ENCODE measurements at regions of chr7 and their contacts with region 1.

Region 1: GRCh38 chr7:45259966-45260646 is 102.5 kb downstream of the RAMP3 start:
- DNase-seq: peak; percentile 39
- H3K4me3 ChIP-seq: no peak overlapping the region
- H3K27ac ChIP-seq: no peak overlapping the region
- H3K4me1 ChIP-seq: no peaks in the 10 kb centered on the region
- H3K27me3 ChIP-seq: peaks cover 0 to 3% of the 10 kb centered on the region in 2 experiments
- CTCF ChIP-seq: peak; percentile 94 to 99
- POLR2A ChIP-seq: no peak

Region 2: GRCh38 chr7:45157653-45158401 is 102.3 kb before region 1 on chr7 and contains the start of gene RAMP3:
- CTCF ChIA-PET with region 1: interaction called, 87 read pairs
- POLR2A ChIA-PET with region 1: interaction called, 6 read pairs
- dilution Hi-C with region 1: no loop called
- intact Hi-C with region 1: loop called (anchors 1 kb)
- DNase-seq: no peak
- H3K4me3 ChIP-seq: no peak within 1 kb of the TSS
- H3K27ac ChIP-seq: no peak within 1 kb of the TSS
- H3K4me1 ChIP-seq: no peaks in the 10 kb centered on the region
- H3K27me3 ChIP-seq: peaks cover 21 to 23% of the 10 kb centered on the region in 2 experiments
- CTCF ChIP-seq: no peak
- POLR2A ChIP-seq: no peak
- total RNA-seq, gene RAMP3: not detected in 2 replicates

Region 3: DNA sequence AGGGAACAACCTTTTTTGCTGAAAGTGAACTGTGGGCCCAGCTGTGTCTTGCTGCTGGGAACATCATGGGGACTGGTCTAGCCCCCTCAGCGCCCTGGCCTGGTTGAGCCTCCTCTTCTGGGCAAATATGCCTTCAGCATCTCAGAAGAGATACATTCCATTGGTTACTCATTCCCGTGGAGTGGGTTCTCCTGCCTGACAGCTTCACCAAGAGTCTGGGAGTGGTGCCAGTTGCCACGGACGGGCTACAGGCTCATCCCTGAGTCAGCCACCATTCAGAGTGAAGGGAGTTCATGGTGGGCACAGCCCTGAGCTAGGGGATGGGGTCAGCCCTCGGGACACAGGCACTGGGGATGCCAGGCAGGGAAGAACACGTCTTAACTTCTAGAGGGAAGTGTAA is 20.6 kb before region 1 on chr7:
- CTCF ChIA-PET with region 1: interaction called, 12 read pairs
- POLR2A ChIA-PET with region 1: no interaction called
- dilution Hi-C with region 1: no loop called
- intact Hi-C with region 1: no loop called
- DNase-seq: peak; percentile 56
- H3K4me3 ChIP-seq: no peak overlapping the region
- H3K27ac ChIP-seq: peak overlapping the region; percentile 0
- H3K4me1 ChIP-seq: peaks cover 16% of the 10 kb centered on the region
- H3K27me3 ChIP-seq: no peaks in the 10 kb centered on the region
- CTCF ChIP-seq: no peak
- POLR2A ChIP-seq: no peak

Region 4: GRCh38 chr7:45246354-45246753 is 13.8 kb before region 1 on chr7:
- CTCF ChIA-PET with region 1: interaction called, 18 read pairs
- POLR2A ChIA-PET with region 1: no interaction called
- dilution Hi-C with region 1: no loop called
- intact Hi-C with region 1: no loop called
- DNase-seq: no peak
- H3K4me3 ChIP-seq: no peak overlapping the region
- H3K27ac ChIP-seq: no peak overlapping the region
- H3K4me1 ChIP-seq: no peaks in the 10 kb centered on the region
- H3K27me3 ChIP-seq: peaks cover 0 to 1% of the 10 kb centered on the region in 2 experiments
- CTCF ChIP-seq: no peak
- POLR2A ChIP-seq: no peak

Region 5: DNA sequence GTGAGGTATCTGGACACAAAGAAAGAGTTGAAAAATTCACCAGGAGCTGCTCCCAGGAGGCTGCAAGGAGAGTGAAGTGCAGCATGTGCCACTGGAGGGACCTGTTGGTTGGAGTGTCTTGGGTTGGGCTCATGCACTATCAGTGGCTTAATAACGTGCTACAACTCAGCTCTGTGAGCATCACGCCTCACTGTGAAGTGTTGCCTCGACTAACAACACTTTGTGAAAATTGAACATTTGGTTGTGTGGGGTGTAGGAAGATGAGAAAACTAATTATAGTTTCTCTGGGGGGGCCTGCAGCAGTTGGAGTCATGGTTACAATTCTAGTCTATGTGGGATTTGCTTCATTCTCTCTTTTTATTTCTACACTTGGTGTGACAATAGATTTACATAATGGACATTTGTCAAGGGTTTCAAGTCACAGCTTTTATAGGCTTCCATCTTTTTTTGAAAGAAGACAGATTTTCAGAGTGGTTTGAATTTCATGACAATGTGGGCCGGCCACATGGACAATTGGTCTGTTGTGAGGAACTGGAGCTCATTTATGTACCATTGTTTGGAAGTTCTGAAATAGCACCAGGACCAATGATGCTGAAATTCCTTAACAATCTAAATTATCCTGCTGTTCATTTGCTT is 18.8 kb after region 1 on chr7:
- CTCF ChIA-PET with region 1: no interaction called
- POLR2A ChIA-PET with region 1: no interaction called
- dilution Hi-C with region 1: no loop called
- intact Hi-C with region 1: no loop called
- DNase-seq: no peak
- H3K4me3 ChIP-seq: no peak overlapping the region
- H3K27ac ChIP-seq: no peak overlapping the region
- H3K4me1 ChIP-seq: no peaks in the 10 kb centered on the region
- H3K27me3 ChIP-seq: peaks cover 5 to 7% of the 10 kb centered on the region in 2 experiments
- CTCF ChIP-seq: no peak
- POLR2A ChIP-seq: no peak

Region 6: GRCh38 chr7:45863715-45864114 is 603.6 kb after region 1 on chr7:
- CTCF ChIA-PET with region 1: no interaction called
- POLR2A ChIA-PET with region 1: no interaction called
- dilution Hi-C with region 1: no loop called
- intact Hi-C with region 1: loop called (anchors 10 kb)
- DNase-seq: no peak
- H3K4me3 ChIP-seq: no peak overlapping the region
- H3K27ac ChIP-seq: no peak overlapping the region
- H3K4me1 ChIP-seq: peaks cover 4% of the 10 kb centered on the region
- H3K27me3 ChIP-seq: peaks cover 0 to 4% of the 10 kb centered on the region in 2 experiments
- CTCF ChIP-seq: peak; percentile 7 to 20
- POLR2A ChIP-seq: no peak